ENCODE measurements at regions of chr17 and their contacts with region 1.

Region 1: GRCh38 chr17:76246080-76247066 is 6.1 kb upstream of the RNF157 start:
- DNase-seq: peak; percentile 81
- H3K4me3 Mint-ChIP-seq: peak overlapping the region; percentile 64
- H3K27ac Mint-ChIP-seq: peak overlapping the region; percentile 92
- H3K4me1 Mint-ChIP-seq: peaks cover 59% of the 10 kb centered on the region
- H3K27me3 Mint-ChIP-seq: no peaks in the 10 kb centered on the region

Region 2: DNA sequence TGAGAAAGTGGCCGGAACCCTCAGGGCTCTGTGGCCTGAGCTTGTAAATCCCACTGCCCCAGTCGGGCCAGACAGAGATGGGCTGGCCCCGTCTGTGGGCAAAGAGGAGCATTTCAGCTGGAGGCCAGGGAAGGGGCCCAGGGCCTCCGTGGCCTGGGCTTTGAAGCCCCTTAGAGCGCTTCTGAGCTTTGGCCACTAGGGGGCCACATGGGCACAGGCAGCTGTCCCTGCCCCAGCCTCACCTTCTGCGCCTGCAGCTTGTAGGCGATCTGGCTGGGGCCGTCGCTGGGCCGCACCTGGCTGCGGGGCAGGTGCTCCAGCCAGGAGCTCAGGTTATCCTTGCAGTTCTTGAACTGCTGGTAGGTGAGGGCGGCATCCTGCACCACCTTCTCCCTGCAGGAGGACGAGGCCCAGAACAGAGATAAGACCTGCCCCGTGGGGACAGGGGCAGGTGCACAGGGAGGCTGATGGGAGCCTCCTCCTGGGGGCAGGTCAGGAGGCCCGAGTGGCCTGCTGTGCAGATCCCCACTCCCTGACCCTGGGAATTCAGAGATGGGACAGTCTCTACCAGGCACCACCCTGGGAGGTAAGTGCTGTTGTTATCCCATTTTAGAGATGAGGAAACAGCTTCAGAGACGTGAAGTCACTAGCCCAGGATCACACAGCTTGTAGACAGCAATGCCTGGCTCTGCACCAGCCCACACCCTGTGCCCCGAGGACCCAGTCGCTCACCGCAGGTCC is 232.0 kb before region 1 on chr17:
- intact Hi-C with region 1: no loop called
- DNase-seq: peak; percentile 68
- H3K4me3 Mint-ChIP-seq: no peak overlapping the region
- H3K27ac Mint-ChIP-seq: no peak overlapping the region
- H3K4me1 Mint-ChIP-seq: no peaks in the 10 kb centered on the region
- H3K27me3 Mint-ChIP-seq: no peaks in the 10 kb centered on the region

Region 3: GRCh38 chr17:76264755-76265596 is 18.6 kb after region 1 on chr17 and contains the start of gene UBALD2:
- intact Hi-C with region 1: loop called (anchors 1 kb)
- DNase-seq: peak; percentile 100
- H3K4me3 Mint-ChIP-seq: peak within 1 kb of the TSS; percentile 91
- H3K27ac Mint-ChIP-seq: peak within 1 kb of the TSS; percentile 96
- H3K4me1 Mint-ChIP-seq: peaks cover 55% of the 10 kb centered on the region
- H3K27me3 Mint-ChIP-seq: no peaks in the 10 kb centered on the region
- total RNA-seq, gene UBALD2: 204 and 212 TPM in 2 replicates

Region 4: GRCh38 chr17:76296186-76296585 is 49.8 kb after region 1 on chr17:
- intact Hi-C with region 1: no loop called
- DNase-seq: no peak
- H3K4me3 Mint-ChIP-seq: no peak overlapping the region
- H3K27ac Mint-ChIP-seq: no peak overlapping the region
- H3K4me1 Mint-ChIP-seq: peaks cover 3% of the 10 kb centered on the region
- H3K27me3 Mint-ChIP-seq: no peaks in the 10 kb centered on the region

Measured in activated T-helper 2 cell treated with anti-CD3 and anti-CD28 coated beads, Interferon-gamma antibody, Interleukin-2, Interleukin-4, amounts not matched to agents 10 μg/mL and 5 μg/mL and 100 μg/mL, durations not matched to agents 14 hours and 24 hours and 36 hours (primary cell).